Ovary (tissue), 10 donors: ENCODE measurements at regions of chr16 and their contacts with region 1.

Region 1: GRCh38 chr16:6913566-6913965 is 419.1 kb upstream of the RBFOX1 start:
- DNase-seq: no peak
- H3K4me3 ChIP-seq: no peak overlapping the region
- H3K27ac ChIP-seq: no peak overlapping the region
- H3K4me1 ChIP-seq: no peaks in the 10 kb centered on the region
- H3K27me3 ChIP-seq: no peaks in the 10 kb centered on the region
- CTCF ChIP-seq: no peak
- EP300 ChIP-seq: no peak
- POLR2A ChIP-seq: no peak

Region 2: GRCh38 chr16:6545329-6545728 is 368.2 kb before region 1 on chr16:
- intact Hi-C with region 1: no loop called
- DNase-seq: no peak
- H3K4me3 ChIP-seq: no peak overlapping the region
- H3K27ac ChIP-seq: no peak overlapping the region
- H3K4me1 ChIP-seq: no peaks in the 10 kb centered on the region
- H3K27me3 ChIP-seq: no peaks in the 10 kb centered on the region
- CTCF ChIP-seq: no peak
- EP300 ChIP-seq: no peak
- POLR2A ChIP-seq: no peak

Region 3: DNA sequence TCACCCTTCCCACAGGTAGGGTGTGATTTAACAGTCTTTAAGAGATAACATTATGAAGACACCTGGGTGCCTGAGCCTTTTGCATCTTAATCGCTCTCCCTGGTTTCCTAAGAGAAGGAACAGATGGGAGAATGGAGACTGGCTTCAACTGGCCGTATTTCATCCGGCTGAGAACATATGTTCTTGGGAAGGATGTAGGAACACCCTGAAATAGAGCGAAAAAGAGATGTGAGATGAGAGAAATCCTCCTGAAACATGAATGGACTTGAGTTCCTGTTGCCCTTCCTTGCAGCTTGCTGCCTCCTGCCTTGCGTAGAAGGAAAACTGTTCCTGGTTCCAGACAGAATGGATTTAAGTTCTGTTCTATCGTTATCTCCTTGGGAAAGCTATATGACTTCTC is 33.7 kb after region 1 on chr16:
- intact Hi-C with region 1: loop called in 1 of 4 experiments (anchors 1 kb)
- DNase-seq: no peak
- H3K4me3 ChIP-seq: no peak overlapping the region
- H3K27ac ChIP-seq: no peak overlapping the region
- H3K4me1 ChIP-seq: no peaks in the 10 kb centered on the region
- H3K27me3 ChIP-seq: no peaks in the 10 kb centered on the region
- CTCF ChIP-seq: no peak
- EP300 ChIP-seq: no peak
- POLR2A ChIP-seq: no peak

Region 4: GRCh38 chr16:7017006-7017662 is 103.6 kb after region 1 on chr16:
- intact Hi-C with region 1: no loop called
- DNase-seq: no peak
- H3K4me3 ChIP-seq: no peak overlapping the region
- H3K27ac ChIP-seq: no peak overlapping the region
- H3K4me1 ChIP-seq: no peaks in the 10 kb centered on the region
- H3K27me3 ChIP-seq: no peaks in the 10 kb centered on the region
- CTCF ChIP-seq: no peak
- EP300 ChIP-seq: no peak
- POLR2A ChIP-seq: no peak